ENCODE measurements at regions of chr14 and their contacts with region 1.

Region 1: GRCh38 chr14:64800000-64800399 is 79.7 kb downstream of the SPTB start:
- DNase-seq: peak; percentile 55

Region 2: DNA sequence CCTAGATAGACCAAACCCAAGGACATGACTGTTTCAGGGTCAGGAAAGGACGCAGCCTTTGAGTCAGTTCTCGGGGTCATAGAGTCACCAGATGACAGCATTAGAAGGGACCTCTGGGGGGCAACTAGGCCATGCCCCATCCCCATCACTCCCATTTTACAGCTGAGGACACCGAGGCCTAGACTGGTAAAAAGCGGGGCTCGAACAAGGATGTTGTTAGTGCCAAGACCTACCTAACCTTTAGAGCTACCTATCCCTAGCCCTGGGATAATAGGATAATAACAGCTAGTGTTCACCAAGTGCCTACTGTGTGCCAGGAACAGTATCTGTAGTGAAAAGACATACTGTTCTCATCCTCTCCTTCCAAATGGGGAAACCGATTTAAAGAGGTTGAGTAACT is 47.1 kb before region 1 on chr14:
- intact Hi-C with region 1: loop called in 1 of 2 experiments (anchors 1 kb)
- DNase-seq: no peak